ENCODE measurements at regions of chr22 and their contacts with region 1.

Region 1: DNA sequence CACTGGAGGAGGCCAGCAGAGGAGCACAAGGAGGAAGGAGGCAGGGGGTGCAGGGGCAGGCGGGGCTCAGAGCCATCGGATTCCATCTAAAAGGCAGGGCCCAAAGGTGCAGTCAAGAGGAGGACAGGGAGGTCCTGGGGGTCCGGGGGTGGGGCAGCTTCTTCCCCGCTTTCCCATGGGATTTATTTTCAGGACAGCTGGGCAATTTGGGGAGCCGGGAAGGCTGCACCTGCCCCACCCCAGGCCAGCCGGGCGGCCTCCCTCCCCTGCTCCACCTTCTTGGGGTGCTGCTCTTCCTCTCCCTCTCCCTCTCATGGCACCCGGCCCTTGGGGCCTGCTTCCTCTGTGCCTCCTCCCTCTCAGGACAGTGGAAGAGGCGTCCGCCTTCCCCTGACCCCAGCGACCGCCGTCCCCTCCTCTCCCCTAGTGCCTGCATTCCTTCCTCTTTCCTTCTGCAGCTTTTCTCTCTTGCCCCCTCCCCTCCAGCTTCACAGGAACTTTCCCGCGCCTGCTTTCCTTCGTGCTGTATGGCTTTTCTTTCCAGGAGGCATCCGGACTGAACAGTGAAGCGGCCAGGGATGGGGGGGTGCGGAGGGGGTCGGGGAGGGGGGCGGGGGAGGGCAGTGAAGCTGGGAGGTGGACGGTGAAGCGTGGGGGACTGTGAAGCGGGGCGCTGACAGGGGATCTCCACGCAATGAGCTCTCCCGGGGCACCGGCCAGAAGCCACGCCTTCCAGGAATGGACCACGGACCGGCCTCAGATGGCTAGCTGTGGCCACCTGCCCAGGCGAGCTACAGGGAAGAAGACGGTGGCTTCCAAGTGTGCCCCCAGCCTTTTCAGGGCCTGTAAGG is 26.9 kb downstream of the APOBEC3H start:
- DNase-seq: no peak
- H3K4me3 ChIP-seq: no peak overlapping the region
- H3K27ac ChIP-seq: no peak overlapping the region
- H3K4me1 ChIP-seq: no peaks in the 10 kb centered on the region
- CTCF ChIP-seq: no peak

Region 2: DNA sequence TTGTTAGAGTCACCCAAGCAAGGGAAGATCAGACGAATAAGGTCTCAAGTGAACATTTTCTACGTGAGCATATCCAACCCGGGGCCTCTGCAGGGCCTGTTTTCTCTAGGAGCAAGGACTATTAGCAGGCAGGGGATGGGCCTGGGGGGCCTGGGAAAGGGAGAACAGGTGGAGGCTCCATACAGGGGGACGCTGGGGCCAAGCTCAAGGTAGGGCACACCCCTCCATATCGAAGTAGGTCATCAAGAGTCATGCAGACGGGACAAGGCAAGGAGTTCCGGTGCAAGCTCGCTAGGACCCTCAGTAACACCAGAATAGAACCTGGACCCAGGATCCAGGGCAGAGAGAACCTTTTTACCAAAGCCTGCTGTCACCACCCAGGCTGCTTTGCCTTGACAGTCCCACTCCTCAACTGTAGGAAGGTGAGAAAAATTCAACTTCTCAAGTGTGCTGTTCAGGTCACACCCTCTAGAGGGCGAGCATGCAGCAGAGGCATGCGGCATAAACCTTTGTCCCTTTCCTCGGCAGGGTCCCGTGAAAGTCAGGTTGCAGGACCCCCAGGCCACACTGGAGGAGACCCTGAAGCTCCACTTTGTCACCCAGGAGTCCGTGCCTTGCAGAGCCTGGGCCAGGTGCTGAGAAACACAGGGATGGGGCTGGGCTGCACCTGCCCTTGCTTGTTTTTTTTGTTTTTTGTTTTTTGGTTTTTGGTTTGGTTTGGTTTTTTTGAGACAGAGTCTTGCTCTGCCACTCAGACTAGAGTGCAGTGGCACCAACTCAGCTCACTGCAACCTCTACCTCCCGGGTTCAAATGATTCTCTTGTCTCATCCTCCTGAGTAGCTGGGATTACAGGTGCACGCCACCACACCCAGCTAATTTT is 150.4 kb before region 1 on chr22:
- CTCF ChIA-PET with region 1: no interaction called
- POLR2A ChIA-PET with region 1: no interaction called
- intact Hi-C with region 1: loop called (anchors 1 kb)
- DNase-seq: peak; percentile 75
- H3K4me3 ChIP-seq: no peak overlapping the region
- H3K27ac ChIP-seq: no peak overlapping the region
- H3K4me1 ChIP-seq: peaks cover 6% of the 10 kb centered on the region
- CTCF ChIP-seq: peak; percentile 91